ENCODE measurements at regions of chr4 and their contacts with region 1.

Region 1: DNA sequence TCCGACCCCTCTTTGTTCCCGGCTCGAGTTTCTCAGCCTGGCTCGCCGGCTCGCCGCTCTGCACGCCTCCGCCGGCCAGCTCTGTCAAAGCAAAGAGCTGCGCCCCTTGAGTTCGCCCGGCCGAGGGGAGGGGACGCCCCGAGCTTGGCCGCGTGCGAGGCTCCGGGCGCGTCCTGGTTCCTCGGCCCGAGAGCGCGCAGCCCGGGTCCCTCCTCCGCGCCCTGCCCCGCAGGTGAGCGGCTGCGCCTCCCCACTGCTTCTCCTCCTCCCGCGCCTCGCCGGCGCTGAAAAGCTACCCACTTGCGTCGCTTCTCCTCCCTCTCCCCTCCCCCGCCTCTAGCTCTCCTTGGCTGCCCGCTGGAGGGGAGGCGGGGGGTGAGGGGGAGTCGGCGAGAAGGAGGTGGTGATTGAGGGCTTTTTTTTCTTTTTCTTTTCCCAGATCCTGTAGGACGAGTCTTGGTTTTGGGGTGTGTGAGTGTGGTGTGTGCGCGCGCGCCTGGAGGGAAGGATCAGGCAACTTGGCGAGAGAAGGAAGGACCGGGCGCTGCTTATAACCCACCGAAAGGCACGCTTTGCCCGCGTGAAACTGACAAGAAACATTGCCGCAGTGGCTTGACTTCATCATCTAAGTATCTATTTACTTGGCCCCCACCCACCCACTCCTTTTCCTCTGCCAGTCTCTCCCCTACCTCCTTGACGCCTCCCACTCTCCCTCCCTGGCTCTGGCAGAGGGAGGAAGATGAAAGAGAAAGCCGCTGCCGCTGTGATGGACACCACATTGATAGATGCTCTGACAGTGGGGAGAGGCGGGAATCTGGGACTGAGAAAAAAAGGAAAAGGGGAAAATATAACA is at the start of gene LEF1:
- DNase-seq: peak; percentile 73 to 83 (median 74)
- ATAC-seq: peak; percentile 69
- H3K4me3 ChIP-seq: peak within 1 kb of the TSS; percentile 83
- H3K27ac ChIP-seq: peak within 1 kb of the TSS; percentile 65
- H3K4me1 ChIP-seq: peaks cover 10 to 49% of the 10 kb centered on the region in 2 experiments; a peak in 4 of 5 replicates
- H3K27me3 ChIP-seq: no peaks in the 10 kb centered on the region
- CTCF ChIP-seq: peak in 1 of 3 experiments; percentile 24; a peak in 2 of 6 replicates
- EP300 ChIP-seq: no peak
- POLR2A ChIP-seq: peak; percentile 62
- RAD21 ChIP-seq: no peak
- polyA plus RNA-seq, gene LEF1: 15.1 to 17.2 TPM

Region 2: DNA sequence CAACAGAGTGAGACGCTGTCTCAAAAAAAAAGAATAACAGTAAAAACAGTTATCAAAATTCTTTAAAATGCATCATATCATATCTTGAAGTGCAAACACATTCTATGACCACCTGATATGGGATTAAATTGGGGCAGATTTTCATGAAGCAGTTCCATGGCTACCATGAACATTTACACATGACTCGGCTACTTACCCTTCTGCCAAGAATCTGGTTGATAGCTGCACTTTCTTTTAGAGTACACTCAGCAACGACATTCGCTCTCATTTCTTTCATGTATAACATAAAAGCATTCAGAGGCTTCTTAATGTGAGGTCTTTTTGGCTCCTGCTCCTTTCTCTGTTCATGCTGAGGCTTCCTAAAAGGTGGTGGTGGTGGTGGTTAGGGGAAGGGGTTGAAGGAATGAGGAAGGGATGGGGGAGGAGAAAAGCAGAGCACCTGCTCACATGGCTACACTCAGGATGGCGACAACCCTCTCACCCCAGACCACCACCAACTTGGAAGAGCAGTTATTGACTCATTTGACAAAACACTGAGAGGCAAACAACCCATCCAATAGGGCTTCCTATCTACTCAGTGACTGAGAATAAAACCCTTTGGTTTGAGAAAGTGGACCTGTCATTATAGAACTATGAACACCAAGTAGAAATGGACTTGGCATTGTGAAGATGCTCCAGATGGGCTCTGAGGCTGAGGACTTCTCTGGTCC is 90.7 kb before region 1 on chr4:
- CTCF ChIA-PET with region 1: no interaction called
- POLR2A ChIA-PET with region 1: no interaction called
- in situ Hi-C with region 1: loop called (anchors 5 kb)
- intact Hi-C with region 1: no loop called
- DNase-seq: no peak
- ATAC-seq: no peak
- H3K4me3 ChIP-seq: no peak overlapping the region
- H3K27ac ChIP-seq: no peak overlapping the region
- H3K4me1 ChIP-seq: no peaks in the 10 kb centered on the region
- H3K27me3 ChIP-seq: no peaks in the 10 kb centered on the region
- CTCF ChIP-seq: no peak
- EP300 ChIP-seq: no peak
- POLR2A ChIP-seq: no peak
- RAD21 ChIP-seq: no peak

Region 3: DNA sequence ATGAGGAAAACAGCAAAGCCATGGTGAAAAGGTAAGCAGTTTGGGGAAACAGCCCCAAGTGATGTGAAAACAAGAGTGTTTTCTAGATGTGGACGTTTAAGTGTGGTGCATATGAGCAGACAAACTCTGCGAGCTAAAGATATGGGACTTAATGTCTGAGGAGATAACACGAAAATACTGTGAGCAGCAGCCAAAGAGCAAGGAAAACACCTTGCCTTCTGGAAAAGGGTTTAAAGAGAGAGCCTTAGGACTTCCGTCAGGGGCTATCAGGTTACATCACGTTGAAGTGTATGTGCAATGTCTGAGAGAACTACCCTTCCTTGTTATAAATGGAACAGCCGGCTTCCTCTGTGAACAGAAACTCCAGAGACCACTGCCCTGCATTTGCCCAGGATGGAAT is 54.4 kb before region 1 on chr4:
- CTCF ChIA-PET with region 1: no interaction called
- POLR2A ChIA-PET with region 1: no interaction called
- in situ Hi-C with region 1: no loop called
- intact Hi-C with region 1: loop called (anchors 2 kb)
- DNase-seq: peak; percentile 62 to 92 (median 74)
- ATAC-seq: peak; percentile 88
- H3K4me3 ChIP-seq: no peak overlapping the region
- H3K27ac ChIP-seq: peak overlapping the region; percentile 82
- H3K4me1 ChIP-seq: peaks cover 23 to 70% of the 10 kb centered on the region in 2 experiments
- H3K27me3 ChIP-seq: no peaks in the 10 kb centered on the region
- CTCF ChIP-seq: no peak
- EP300 ChIP-seq: peak; percentile 91
- POLR2A ChIP-seq: no peak
- RAD21 ChIP-seq: no peak

Region 4: GRCh38 chr4:108204518-108204917 is 35.6 kb after region 1 on chr4:
- CTCF ChIA-PET with region 1: no interaction called
- POLR2A ChIA-PET with region 1: no interaction called
- in situ Hi-C with region 1: no loop called
- intact Hi-C with region 1: no loop called
- DNase-seq: no peak
- ATAC-seq: no peak
- H3K4me3 ChIP-seq: no peak overlapping the region
- H3K27ac ChIP-seq: no peak overlapping the region
- H3K4me1 ChIP-seq: no peaks in the 10 kb centered on the region
- H3K27me3 ChIP-seq: peaks cover 0 to 4% of the 10 kb centered on the region in 2 experiments; a peak in 1 of 5 replicates
- CTCF ChIP-seq: no peak
- EP300 ChIP-seq: no peak
- POLR2A ChIP-seq: no peak
- RAD21 ChIP-seq: no peak

Region 5: GRCh38 chr4:108360754-108361445 is 192.0 kb after region 1 on chr4:
- CTCF ChIA-PET with region 1: no interaction called
- POLR2A ChIA-PET with region 1: no interaction called
- in situ Hi-C with region 1: no loop called
- intact Hi-C with region 1: loop called (anchors 5 kb)
- DNase-seq: peak in 2 of 4 experiments; percentile 25 to 48
- ATAC-seq: peak; percentile 25
- H3K4me3 ChIP-seq: no peak overlapping the region
- H3K27ac ChIP-seq: peak overlapping the region; percentile 86
- H3K4me1 ChIP-seq: peaks cover 17 to 35% of the 10 kb centered on the region in 2 experiments
- H3K27me3 ChIP-seq: no peaks in the 10 kb centered on the region
- CTCF ChIP-seq: no peak
- EP300 ChIP-seq: no peak
- POLR2A ChIP-seq: no peak
- RAD21 ChIP-seq: no peak

Measured in K562 (cell line).